ENCODE measurements at regions of chr6 and their contacts with region 1.

Region 1: DNA sequence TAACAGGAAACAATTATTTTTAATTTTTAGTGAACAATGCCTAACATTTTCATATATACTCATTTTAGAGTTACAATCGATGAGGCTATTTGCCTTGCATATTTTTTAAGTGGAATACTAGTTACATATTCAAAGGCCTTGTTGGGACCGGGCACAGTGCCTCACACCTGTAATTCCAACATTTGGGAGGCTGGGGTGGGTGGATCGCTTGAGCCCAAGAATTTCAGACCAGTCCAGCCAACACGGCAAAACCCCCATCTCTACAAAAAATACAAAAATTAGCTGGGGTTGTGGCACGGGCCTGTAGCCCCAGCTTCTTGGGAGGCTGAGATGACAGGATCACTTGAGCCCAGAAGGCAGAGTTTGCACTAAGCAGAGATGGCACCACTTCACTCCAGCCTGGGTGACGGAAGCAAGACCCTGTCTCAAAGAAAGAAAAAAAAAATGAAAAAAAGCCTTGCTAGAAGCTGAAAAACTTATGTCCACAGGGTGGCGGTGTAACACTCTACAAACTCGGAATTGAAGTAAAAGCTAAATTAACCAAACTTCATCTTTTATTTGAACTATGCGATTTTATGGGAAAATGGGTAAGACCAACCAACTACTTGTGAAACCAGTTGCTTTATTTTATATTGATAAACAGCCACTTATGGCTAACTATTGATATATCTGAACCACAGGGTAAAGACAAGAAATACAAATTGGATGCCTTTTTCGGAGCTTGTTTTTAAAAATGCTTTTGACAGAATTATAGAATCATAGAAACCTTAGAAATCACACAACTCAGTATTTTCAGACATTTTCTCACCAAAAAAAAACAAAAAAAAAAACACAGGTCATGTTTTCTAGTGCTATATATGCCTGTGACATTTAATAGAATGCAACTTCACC is 24.1 kb upstream of the ROS1 start:
- DNase-seq: peak; percentile 50
- H3K4me3 ChIP-seq: no peak overlapping the region
- H3K27ac ChIP-seq: peak overlapping the region; percentile 98
- H3K4me1 ChIP-seq: peaks cover 39% of the 10 kb centered on the region
- H3K27me3 ChIP-seq: no peaks in the 10 kb centered on the region
- CTCF ChIP-seq: peak; percentile 67 to 68

Region 2: GRCh38 chr6:117404548-117404947 is 45.2 kb before region 1 on chr6:
- CTCF ChIA-PET with region 1: interaction called, 4 read pairs
- dilution Hi-C with region 1: no loop called
- in situ Hi-C with region 1: no loop called
- intact Hi-C with region 1: loop called (anchors 1 kb)
- DNase-seq: peak; percentile 26
- H3K4me3 ChIP-seq: no peak overlapping the region
- H3K27ac ChIP-seq: no peak overlapping the region
- H3K4me1 ChIP-seq: no peaks in the 10 kb centered on the region
- H3K27me3 ChIP-seq: no peaks in the 10 kb centered on the region
- CTCF ChIP-seq: peak; percentile 29 to 54

Region 3: GRCh38 chr6:117494694-117495318 is 45.0 kb after region 1 on chr6:
- CTCF ChIA-PET with region 1: no interaction called
- dilution Hi-C with region 1: no loop called
- in situ Hi-C with region 1: no loop called
- intact Hi-C with region 1: no loop called
- DNase-seq: peak; percentile 39
- H3K4me3 ChIP-seq: no peak overlapping the region
- H3K27ac ChIP-seq: peak overlapping the region; percentile 95
- H3K4me1 ChIP-seq: peaks cover 57% of the 10 kb centered on the region
- H3K27me3 ChIP-seq: no peaks in the 10 kb centered on the region
- CTCF ChIP-seq: no peak

Region 4: GRCh38 chr6:117521791-117522502 is 72.2 kb after region 1 on chr6:
- CTCF ChIA-PET with region 1: no interaction called
- dilution Hi-C with region 1: no loop called
- in situ Hi-C with region 1: no loop called
- intact Hi-C with region 1: no loop called
- DNase-seq: no peak
- H3K4me3 ChIP-seq: no peak overlapping the region
- H3K27ac ChIP-seq: no peak overlapping the region
- H3K4me1 ChIP-seq: no peaks in the 10 kb centered on the region
- H3K27me3 ChIP-seq: no peaks in the 10 kb centered on the region
- CTCF ChIP-seq: no peak

Region 5: DNA sequence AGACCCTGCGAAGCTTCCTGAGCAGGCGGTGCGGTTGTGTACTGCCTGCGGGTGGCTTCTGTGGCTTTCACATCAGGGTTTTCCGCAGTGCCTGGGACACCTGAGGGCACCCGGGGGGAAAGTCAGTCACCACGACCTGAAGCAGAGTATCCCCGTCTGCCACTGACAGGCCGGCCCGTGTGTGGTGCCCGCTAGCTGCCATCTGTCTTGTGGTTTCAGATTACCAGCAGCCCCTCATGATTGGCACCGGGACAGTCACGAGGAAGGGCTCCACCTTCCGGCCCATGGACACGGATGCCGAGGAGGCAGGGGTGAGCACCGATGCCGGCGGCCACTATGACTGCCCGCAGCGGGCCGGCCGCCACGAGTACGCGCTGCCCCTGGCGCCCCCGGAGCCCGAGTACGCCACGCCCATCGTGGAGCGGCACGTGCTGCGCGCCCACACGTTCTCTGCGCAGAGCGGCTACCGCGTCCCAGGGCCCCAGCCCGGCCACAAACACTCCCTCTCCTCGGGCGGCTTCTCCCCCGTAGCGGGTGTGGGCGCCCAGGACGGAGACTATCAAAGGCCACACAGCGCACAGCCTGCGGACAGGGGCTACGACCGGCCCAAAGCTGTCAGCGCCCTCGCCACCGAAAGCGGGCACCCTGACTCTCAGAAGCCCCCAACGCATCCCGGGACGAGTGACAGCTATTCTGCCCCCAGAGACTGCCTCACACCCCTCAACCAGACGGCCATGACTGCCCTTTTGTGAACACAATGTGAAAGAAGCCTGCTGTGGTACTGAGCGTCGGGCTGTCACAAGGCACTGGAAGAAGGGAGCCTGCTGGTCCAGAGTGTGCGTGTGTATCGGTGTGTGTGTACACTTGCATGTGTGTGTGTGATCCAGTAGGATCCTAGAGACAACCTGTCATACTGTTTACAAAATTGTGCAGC is 98.2 kb after region 1 on chr6:
- CTCF ChIA-PET with region 1: no interaction called
- dilution Hi-C with region 1: loop called (anchors 5 kb)
- in situ Hi-C with region 1: loop called (anchors 5 to 10 kb)
- intact Hi-C with region 1: no loop called
- DNase-seq: no peak
- H3K4me3 ChIP-seq: peak overlapping the region in 1 of 3 experiments; percentile 17
- H3K27ac ChIP-seq: peak overlapping the region; percentile 6
- H3K4me1 ChIP-seq: peaks cover 48% of the 10 kb centered on the region
- H3K27me3 ChIP-seq: no peaks in the 10 kb centered on the region
- CTCF ChIP-seq: no peak

Region 6: GRCh38 chr6:117674991-117675657 is 225.3 kb after region 1 on chr6 and contains the start of gene NUS1:
- CTCF ChIA-PET with region 1: no interaction called
- dilution Hi-C with region 1: no loop called
- in situ Hi-C with region 1: no loop called
- intact Hi-C with region 1: loop called (anchors 2 kb)
- DNase-seq: peak; percentile 96
- H3K4me3 ChIP-seq: peak within 1 kb of the TSS; percentile 75 to 82 (median 80)
- H3K27ac ChIP-seq: peak within 1 kb of the TSS; percentile 50
- H3K4me1 ChIP-seq: peaks cover 21% of the 10 kb centered on the region
- H3K27me3 ChIP-seq: no peaks in the 10 kb centered on the region
- CTCF ChIP-seq: peak; percentile 64 to 86
- total RNA-seq, gene NUS1: 17.7 to 38.7 TPM

Measured in mammary epithelial cell (primary cell).